Naive thymus-derived CD4-positive, alpha-beta T cell (primary cell): ENCODE measurements at regions of chr11 and their contacts with region 1.

Region 1: DNA sequence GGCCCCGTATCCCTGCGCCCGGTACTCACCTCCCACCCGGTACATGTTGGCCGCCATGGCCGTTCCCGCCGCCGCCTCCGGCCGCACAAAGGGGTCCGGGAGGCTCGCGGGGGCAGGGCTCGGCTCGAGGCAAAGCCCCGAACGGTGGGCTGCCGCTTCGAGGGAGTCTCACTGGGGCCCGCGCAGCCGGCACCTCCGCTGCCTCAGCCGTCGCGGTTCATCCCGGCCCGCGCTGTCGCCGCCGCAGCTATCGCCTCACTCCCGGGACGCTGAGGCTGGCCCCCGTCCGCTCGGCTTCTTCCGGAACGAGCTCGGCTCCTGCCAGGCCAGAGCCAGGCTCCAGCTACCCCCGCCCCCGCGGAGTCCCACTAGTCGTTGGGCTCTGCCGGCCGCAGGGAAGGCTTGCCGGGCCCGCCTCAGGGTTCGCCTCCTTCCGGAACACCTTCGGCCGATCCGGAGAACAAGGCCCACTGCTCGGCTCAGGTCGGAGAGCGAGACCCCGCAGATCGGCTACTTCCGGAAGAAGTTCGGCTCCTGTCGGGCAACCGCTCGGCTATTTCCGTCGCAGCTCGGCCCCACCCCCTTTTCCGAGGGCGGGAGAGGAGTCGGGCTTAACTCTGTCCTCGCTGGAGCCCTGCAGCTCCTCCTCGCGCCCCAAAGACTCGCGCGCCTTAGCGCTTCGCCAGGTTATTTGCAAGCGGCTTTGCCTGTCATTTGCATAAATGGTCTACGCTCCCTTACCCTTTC is at the start of gene MTA2:
- DNase-seq: peak; percentile 98 to 100 (median 100)
- ATAC-seq: peak; percentile 85
- H3K4me3 ChIP-seq: peak within 1 kb of the TSS; percentile 71
- H3K4me3 Mint-ChIP-seq: peak within 1 kb of the TSS; percentile 85 to 99 (median 94)
- H3K27ac ChIP-seq: peak within 1 kb of the TSS; percentile 98
- H3K27ac Mint-ChIP-seq: peak within 1 kb of the TSS; percentile 90 to 98 (median 97)
- H3K4me1 ChIP-seq: peaks cover 16 to 23% of the 10 kb centered on the region in 2 donors
- H3K4me1 Mint-ChIP-seq: peaks cover 43 to 64% (median 54%) of the 10 kb centered on the region in 7 donors
- H3K27me3 ChIP-seq: no peaks in the 10 kb centered on the region
- H3K27me3 Mint-ChIP-seq: no peaks in the 10 kb centered on the region
- total RNA-seq, gene MTA2: 134 to 238 (median 199) TPM

Region 2: GRCh38 chr11:62054484-62055121 is 547.0 kb before region 1 on chr11:
- CTCF ChIA-PET with region 1: no interaction called
- POLR2A ChIA-PET with region 1: no interaction called
- intact Hi-C with region 1: no loop called
- DNase-seq: peak in 7 of 9 donors; percentile 5 to 47 (median 21)
- ATAC-seq: no peak
- H3K4me3 ChIP-seq: no peak overlapping the region
- H3K4me3 Mint-ChIP-seq: no peak overlapping the region
- H3K27ac ChIP-seq: no peak overlapping the region
- H3K27ac Mint-ChIP-seq: no peak overlapping the region
- H3K4me1 ChIP-seq: no peaks in the 10 kb centered on the region
- H3K4me1 Mint-ChIP-seq: no peaks in the 10 kb centered on the region
- H3K27me3 ChIP-seq: no peaks in the 10 kb centered on the region
- H3K27me3 Mint-ChIP-seq: peaks cover 0 to 24% (median 0%) of the 10 kb centered on the region in 5 donors

Region 3: GRCh38 chr11:62612366-62613290 is 11.1 kb after region 1 on chr11 and contains the starts of genes EML3 and ROM1:
- CTCF ChIA-PET with region 1: interaction called, 8 read pairs
- POLR2A ChIA-PET with region 1: interaction called, 219 read pairs
- intact Hi-C with region 1: loop called (anchors 1 kb)
- DNase-seq: peak; percentile 74 to 96 (median 83)
- ATAC-seq: peak; percentile 90
- H3K4me3 ChIP-seq: peak within 1 kb of the TSS; percentile 99
- H3K4me3 Mint-ChIP-seq: peak within 1 kb of the TSS; percentile 89 to 100 (median 96)
- H3K27ac ChIP-seq: peak within 1 kb of the TSS; percentile 92
- H3K27ac Mint-ChIP-seq: peak within 1 kb of the TSS; percentile 93 to 100 (median 97)
- H3K4me1 ChIP-seq: peaks cover 19 to 32% of the 10 kb centered on the region in 2 donors
- H3K4me1 Mint-ChIP-seq: peaks cover 31 to 56% (median 48%) of the 10 kb centered on the region in 7 donors
- H3K27me3 ChIP-seq: no peaks in the 10 kb centered on the region
- H3K27me3 Mint-ChIP-seq: no peaks in the 10 kb centered on the region
- total RNA-seq, gene EML3: 152 to 209 (median 188) TPM
- total RNA-seq, gene ROM1: 1.2 to 2.4 (median 2.0) TPM

Region 4: DNA sequence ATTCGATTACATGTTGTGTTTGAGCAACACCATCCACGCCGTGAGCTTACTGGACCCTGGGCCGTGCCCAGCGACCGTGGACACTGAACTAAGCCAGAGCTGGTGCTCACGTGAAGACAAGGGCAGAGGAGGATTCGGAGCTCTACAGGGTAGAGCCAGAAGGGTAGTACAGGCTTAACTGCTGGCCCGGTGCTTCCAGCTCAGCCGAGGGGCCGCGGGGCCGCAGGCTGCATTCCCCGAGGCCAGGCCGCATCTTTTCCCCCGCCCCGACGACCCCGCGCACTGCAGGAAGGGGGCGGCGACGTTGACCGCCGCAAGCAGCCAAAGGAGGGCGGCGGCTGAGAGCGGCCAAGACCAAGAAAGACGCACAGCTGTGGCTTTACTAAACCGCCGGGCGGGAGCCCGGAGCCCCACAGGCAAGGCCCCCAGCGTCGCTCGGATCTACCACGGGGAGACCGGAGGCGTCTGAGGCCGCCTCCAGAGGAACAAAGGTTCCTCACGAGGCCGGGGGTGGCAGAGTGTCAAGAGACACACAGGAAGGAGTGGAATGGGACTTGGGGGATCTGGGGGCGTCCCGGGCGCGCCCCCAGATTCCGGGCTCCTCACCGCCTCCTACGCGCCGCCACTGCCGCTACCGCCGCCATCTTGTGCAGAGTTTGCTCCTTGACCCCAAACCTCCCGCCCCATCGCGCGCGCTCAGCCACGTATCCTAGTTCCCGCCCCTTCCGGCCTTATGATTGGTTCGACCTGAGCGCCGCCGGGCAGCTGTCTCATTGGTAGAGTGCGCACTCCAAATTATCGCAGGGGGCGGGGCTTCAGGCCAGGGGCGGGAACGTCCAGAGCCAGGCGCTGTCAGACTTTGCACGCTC is 44.6 kb after region 1 on chr11 and contains the start of gene GANAB:
- CTCF ChIA-PET with region 1: interaction called, 3 read pairs
- POLR2A ChIA-PET with region 1: interaction called, 32 read pairs
- intact Hi-C with region 1: loop called (anchors 1 to 2 kb)
- DNase-seq: peak; percentile 89 to 99 (median 97)
- ATAC-seq: peak; percentile 99
- H3K4me3 ChIP-seq: peak within 1 kb of the TSS; percentile 84
- H3K4me3 Mint-ChIP-seq: peak within 1 kb of the TSS; percentile 94 to 99 (median 98)
- H3K27ac ChIP-seq: peak within 1 kb of the TSS; percentile 97
- H3K27ac Mint-ChIP-seq: peak within 1 kb of the TSS; percentile 92 to 98 (median 96)
- H3K4me1 ChIP-seq: peaks cover 6 to 25% of the 10 kb centered on the region in 2 donors
- H3K4me1 Mint-ChIP-seq: peaks cover 6 to 44% (median 37%) of the 10 kb centered on the region in 7 donors
- H3K27me3 ChIP-seq: no peaks in the 10 kb centered on the region
- H3K27me3 Mint-ChIP-seq: no peaks in the 10 kb centered on the region
- total RNA-seq, gene GANAB: 203 to 313 (median 286) TPM

Region 5: DNA sequence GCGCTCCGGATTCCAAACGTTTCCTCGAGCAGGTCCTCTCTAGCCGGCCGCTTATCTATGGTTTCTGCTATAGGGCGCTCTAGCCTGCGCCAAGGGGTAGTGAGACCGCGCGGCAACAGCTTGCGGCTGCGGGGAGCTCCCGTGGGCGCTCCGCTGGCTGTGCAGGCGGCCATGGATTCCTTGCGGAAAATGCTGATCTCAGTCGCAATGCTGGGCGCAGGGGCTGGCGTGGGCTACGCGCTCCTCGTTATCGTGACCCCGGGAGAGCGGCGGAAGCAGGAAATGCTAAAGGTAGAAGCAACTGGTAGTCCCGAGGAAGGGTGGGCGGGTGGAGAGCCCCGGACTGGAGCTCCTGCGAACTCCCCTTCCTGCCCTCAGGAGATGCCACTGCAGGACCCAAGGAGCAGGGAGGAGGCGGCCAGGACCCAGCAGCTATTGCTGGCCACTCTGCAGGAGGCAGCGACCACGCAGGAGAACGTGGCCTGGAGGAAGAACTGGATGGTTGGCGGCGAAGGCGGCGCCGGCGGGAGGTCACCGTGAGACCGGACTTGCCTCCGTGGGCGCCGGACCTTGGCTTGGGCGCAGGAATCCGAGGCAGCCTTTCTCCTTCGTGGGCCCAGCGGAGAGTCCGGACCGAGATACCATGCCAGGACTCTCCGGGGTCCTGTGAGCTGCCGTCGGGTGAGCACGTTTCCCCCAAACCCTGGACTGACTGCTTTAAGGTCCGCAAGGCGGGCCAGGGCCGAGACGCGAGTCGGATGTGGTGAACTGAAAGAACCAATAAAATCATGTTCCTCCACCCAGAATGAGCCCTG is 70.2 kb after region 1 on chr11 and contains the starts of genes LBHD1 and UQCC3:
- CTCF ChIA-PET with region 1: interaction called, 8 read pairs
- POLR2A ChIA-PET with region 1: interaction called, 269 read pairs
- intact Hi-C with region 1: no loop called
- DNase-seq: peak; percentile 49 to 80 (median 73)
- ATAC-seq: peak; percentile 85
- H3K4me3 ChIP-seq: peak within 1 kb of the TSS; percentile 62
- H3K4me3 Mint-ChIP-seq: peak within 1 kb of the TSS; percentile 94 to 100 (median 99)
- H3K27ac ChIP-seq: peak within 1 kb of the TSS; percentile 90
- H3K27ac Mint-ChIP-seq: peak within 1 kb of the TSS; percentile 91 to 97 (median 96)
- H3K4me1 ChIP-seq: peaks cover 12 to 25% of the 10 kb centered on the region in 2 donors
- H3K4me1 Mint-ChIP-seq: peaks cover 12 to 62% (median 51%) of the 10 kb centered on the region in 7 donors
- H3K27me3 ChIP-seq: no peaks in the 10 kb centered on the region
- H3K27me3 Mint-ChIP-seq: no peaks in the 10 kb centered on the region
- total RNA-seq, gene LBHD1: 13.8 to 26.4 (median 20.8) TPM
- total RNA-seq, gene UQCC3: 2.2 to 8.2 (median 5.8) TPM

Region 6: DNA sequence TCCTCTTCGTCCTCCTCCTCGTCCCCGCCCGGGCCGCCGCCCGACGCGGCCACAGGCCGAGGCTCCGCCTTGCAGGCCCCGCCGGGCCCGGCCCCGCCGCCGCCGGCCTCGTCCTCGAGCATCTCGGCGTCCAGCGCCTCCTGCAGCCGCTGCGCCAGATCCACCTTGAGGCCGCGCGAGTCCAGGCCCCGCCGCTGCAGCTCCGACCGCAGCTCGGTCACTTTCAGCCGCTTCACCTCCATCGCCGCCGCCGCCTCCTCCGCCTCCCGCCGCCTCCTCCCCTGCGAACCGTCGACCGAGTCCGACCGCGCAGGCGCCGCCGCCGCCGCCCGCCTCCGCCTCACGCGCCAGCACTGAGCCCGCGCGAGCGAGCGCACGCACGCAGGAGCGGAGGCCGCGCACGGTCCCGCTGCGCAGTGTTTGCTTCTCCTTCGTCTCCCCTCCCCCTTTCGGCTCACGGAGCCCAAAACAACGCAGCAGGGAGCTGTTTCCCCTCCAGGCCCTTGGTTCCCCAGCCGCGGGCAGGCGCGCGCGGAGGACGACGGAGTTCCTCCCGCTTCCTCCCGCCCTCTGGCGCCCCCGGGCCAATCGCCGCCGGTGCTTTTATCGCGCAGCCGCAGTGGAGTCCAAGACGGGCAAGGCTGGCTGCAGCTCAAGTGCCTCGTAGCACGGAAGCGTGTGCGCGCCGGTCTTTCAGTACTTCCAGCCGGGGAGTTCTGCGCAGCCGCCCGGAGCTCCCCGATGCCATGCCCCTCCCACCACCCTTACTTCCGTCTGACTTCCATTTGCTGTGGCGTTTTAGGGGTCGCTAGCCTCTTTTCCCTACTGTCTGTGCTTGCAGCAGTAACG is 125.6 kb after region 1 on chr11 and contains the start of gene HNRNPUL2:
- CTCF ChIA-PET with region 1: no interaction called
- POLR2A ChIA-PET with region 1: interaction called, 29 read pairs
- intact Hi-C with region 1: loop called (anchors 1 kb)
- DNase-seq: peak; percentile 96 to 100 (median 99)
- ATAC-seq: peak; percentile 89
- H3K4me3 ChIP-seq: peak within 1 kb of the TSS; percentile 87
- H3K4me3 Mint-ChIP-seq: peak within 1 kb of the TSS; percentile 91 to 99 (median 96)
- H3K27ac ChIP-seq: peak within 1 kb of the TSS; percentile 92
- H3K27ac Mint-ChIP-seq: peak within 1 kb of the TSS; percentile 95 to 100 (median 98)
- H3K4me1 ChIP-seq: peaks cover 36 to 38% of the 10 kb centered on the region in 2 donors
- H3K4me1 Mint-ChIP-seq: peaks cover 23 to 65% (median 58%) of the 10 kb centered on the region in 7 donors
- H3K27me3 ChIP-seq: no peaks in the 10 kb centered on the region
- H3K27me3 Mint-ChIP-seq: peaks cover 0 to 2% (median 0%) of the 10 kb centered on the region in 5 donors
- total RNA-seq, gene HNRNPUL2: 43.4 to 77.5 (median 65.3) TPM

Region 7: DNA sequence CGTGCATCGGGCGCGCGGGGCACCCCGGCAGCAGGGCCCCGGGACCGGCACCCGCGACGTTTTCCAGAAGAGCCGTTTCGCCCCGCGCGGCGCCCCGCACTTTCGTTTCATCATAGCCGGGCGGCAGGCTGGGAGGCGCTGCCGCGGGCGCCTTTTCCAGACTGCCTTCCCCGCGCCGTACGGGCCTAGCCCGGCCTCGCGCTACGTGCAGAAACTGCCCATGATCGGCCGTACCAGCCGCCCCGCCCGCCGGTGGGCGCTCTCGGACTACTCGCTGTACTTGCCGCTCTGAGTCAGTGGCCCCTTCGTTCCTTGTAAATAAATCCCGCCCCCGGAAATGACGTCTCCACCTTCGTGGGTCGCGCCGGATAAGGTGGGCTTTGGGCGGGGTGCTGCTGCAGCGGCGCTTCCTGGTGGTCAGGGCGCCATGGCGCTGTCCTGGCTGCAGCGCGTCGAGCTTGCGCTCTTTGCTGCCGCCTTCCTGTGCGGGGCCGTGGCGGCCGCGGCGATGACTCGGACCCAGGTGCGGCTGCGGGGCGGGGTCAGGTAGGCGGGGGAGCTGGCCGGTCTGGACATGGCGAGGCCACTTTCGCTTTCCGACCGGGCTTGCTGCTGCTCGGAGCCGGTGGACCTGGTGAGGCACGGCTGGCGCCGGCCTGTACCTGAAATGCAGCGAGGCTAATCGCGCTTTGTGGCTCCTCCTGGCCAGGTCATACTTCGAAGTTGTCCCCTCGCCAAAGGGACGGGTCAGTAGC is 185.6 kb after region 1 on chr11 and contains the start of gene TMEM179B:
- CTCF ChIA-PET with region 1: no interaction called
- POLR2A ChIA-PET with region 1: interaction called, 3 read pairs
- intact Hi-C with region 1: loop called in 1 of 2 experiments (anchors 1 kb)
- DNase-seq: peak; percentile 87 to 98 (median 95)
- ATAC-seq: peak; percentile 83
- H3K4me3 ChIP-seq: peak within 1 kb of the TSS; percentile 82
- H3K4me3 Mint-ChIP-seq: peak within 1 kb of the TSS; percentile 93 to 97 (median 96)
- H3K27ac ChIP-seq: peak within 1 kb of the TSS; percentile 93
- H3K27ac Mint-ChIP-seq: peak within 1 kb of the TSS; percentile 91 to 99 (median 96)
- H3K4me1 ChIP-seq: peaks cover 32 to 38% of the 10 kb centered on the region in 2 donors
- H3K4me1 Mint-ChIP-seq: peaks cover 22 to 59% (median 42%) of the 10 kb centered on the region in 7 donors
- H3K27me3 ChIP-seq: no peaks in the 10 kb centered on the region
- H3K27me3 Mint-ChIP-seq: no peaks in the 10 kb centered on the region
- total RNA-seq, gene TMEM179B: 23.2 to 72.3 (median 50.9) TPM